ENCODE measurements at regions of chr4 and their contacts with region 1.

Region 1: DNA sequence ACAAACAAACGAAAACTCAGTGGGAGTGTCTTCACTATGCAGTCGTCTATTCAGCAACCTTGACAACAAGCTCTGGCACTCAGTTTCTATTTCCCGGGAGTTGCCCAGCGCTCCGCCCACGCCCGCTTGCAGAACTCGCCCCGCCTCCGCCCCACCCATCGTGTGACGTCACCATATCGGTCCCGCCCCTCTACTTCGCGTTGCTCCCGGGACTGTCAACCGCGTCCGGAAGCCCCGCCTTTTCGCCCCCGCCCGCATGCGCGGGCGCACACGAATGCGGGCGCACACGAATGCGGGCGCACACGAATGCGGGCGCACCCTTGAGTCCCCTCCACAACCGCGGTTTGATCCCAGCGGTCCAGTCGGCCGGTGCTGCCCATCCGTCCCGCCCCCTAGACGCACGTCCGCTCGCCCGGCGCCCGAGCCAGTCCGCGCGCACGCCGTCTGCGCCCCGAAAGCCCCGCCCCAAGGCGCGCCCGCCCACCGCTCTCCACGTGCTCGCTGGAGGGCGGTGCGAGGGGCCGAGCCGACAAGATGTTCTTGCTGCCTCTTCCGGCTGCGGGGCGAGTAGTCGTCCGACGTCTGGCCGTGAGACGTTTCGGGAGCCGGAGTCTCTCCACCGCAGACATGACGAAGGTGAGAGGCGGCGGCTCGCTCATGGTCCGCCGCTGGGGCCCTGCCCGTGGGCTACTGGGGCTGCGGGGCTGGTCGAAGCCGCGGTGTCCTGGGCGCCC is at the start of gene LAP3:
- DNase-seq: peak; percentile 90
- ATAC-seq: peak; percentile 92
- H3K4me3 ChIP-seq: peak within 1 kb of the TSS; percentile 91
- H3K27ac ChIP-seq: peak within 1 kb of the TSS; percentile 44
- H3K4me1 ChIP-seq: peaks cover 10% of the 10 kb centered on the region
- H3K27me3 ChIP-seq: no peaks in the 10 kb centered on the region
- CTCF ChIP-seq: no peak
- total RNA-seq, gene LAP3: 63.8 and 65.1 TPM in 2 replicates

Region 2: DNA sequence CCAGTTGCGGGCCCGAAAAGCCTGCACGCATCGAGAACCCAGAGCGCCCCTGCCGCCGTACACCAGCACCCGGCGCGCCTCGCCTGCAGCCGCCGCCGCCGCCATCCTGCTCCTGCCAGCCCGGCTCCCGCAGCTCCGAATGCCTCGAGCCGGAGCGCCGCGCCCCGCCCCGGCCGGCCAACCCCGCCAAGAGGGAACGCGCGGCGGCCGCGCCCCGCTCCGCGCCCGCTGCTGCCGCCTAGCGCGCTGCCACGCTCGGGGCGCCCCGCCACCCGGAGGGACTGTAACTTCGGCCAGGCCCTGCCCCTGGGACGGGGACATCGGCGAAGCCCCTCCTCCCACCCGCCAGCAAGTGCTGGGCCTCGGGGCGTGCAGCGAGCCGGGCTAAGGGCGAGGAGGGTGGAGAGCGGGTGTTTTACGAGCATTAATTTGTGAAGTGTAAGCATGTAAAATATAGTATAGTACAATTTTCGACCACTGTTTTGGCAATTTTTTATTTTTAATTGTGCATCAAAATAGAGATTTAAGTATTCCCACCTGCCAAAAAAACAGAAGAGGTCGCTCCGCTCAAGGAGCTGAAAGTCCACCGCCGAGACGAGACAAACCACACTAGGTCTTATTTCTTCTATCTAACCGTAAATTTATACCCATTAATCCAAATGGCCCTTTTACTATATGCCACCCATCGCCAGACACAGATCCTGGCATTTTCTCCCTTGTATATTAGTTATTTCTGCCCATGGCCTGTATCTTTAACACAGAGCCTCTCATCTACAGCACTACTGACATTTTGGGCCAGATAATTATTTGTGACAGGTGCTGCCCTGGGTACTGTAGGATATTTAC is 64.9 kb before region 1 on chr4 and contains the start of gene QDPR:
- CTCF ChIA-PET with region 1: no interaction called
- POLR2A ChIA-PET with region 1: no interaction called
- intact Hi-C with region 1: loop called (anchors 1 kb)
- DNase-seq: peak; percentile 80
- ATAC-seq: peak; percentile 95
- H3K4me3 ChIP-seq: peak within 1 kb of the TSS; percentile 89
- H3K27ac ChIP-seq: 0 out of 2 replicates have a peak within 1 kb of the TSS, but pooled peaks have one; percentile 8
- H3K4me1 ChIP-seq: peaks cover 10% of the 10 kb centered on the region
- H3K27me3 ChIP-seq: peaks cover 16% of the 10 kb centered on the region
- CTCF ChIP-seq: no peak; the same call in 1 of the 2 replicates
- total RNA-seq, gene QDPR: 10.0 and 13.4 TPM in 2 replicates

Region 3: DNA sequence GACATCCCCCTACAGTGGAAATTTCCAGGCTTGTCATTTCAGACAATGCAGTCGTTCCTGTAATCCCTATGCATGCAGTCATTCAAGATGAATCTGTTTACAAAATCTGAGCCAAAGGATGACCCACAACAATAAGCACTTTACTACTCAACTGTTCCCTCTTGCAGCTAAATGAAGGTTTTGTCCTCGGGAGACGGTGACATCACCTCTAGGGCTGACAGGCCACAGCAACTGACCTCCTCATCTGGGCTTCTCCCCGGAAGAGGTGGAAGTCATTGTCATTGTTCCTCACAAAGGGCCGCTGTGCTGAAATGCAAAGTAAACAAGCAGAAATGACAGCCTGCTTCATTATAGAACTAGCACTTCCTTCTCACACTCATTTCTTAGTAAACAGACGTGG is 32.9 kb before region 1 on chr4:
- CTCF ChIA-PET with region 1: no interaction called
- POLR2A ChIA-PET with region 1: no interaction called
- intact Hi-C with region 1: loop called (anchors 1 kb)
- DNase-seq: peak; percentile 42
- ATAC-seq: peak; percentile 76
- H3K4me3 ChIP-seq: no peak overlapping the region
- H3K27ac ChIP-seq: no peak overlapping the region
- H3K4me1 ChIP-seq: peaks cover 2% of the 10 kb centered on the region; the same call in 1 of the 2 replicates
- H3K27me3 ChIP-seq: no peaks in the 10 kb centered on the region
- CTCF ChIP-seq: no peak

Region 4: DNA sequence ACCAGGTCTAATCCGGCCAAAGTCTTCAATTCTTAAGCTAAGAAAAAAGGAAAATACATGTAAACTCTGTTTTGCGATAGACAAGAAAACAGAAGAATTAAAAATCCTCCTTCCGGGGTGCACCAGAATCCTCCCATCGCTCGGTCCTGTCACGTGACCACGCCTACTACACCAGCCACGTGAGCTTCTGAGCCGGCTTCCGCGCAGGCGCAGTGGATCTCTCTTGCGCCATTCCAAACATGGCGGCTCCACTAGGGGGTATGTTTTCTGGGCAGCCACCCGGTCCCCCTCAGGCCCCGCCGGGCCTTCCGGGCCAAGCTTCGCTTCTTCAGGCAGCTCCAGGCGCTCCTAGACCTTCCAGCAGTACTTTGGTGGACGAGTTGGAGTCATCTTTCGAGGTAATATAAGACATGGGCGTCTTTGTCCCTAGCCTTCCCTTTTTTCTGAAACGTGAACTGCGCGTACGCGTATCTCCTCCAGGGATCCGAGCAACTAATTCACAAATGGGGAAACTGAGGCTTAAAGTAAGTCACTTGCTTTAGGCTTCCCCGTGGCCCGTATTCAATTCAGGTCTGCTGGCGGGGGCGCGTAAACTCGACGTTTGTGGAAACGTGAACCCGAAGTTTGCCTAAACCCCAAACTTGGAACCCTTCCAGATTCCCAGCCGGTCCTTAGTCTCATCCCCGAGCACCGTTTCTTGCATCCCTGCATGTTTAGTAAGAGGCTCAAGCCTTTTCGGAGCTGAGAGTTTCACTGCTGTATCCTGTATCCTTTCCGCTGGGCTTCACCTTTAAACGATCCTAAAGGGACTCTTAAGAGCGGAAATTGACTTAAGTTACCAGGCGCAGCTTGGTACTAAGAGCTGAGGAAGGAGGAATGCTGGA is 37.6 kb after region 1 on chr4 and contains the start of gene MED28:
- CTCF ChIA-PET with region 1: no interaction called
- POLR2A ChIA-PET with region 1: no interaction called
- intact Hi-C with region 1: loop called (anchors 2 kb)
- DNase-seq: peak; percentile 90
- ATAC-seq: peak; percentile 80
- H3K4me3 ChIP-seq: peak within 1 kb of the TSS; percentile 98
- H3K27ac ChIP-seq: peak within 1 kb of the TSS; percentile 85
- H3K4me1 ChIP-seq: peaks cover 12% of the 10 kb centered on the region
- H3K27me3 ChIP-seq: no peaks in the 10 kb centered on the region
- CTCF ChIP-seq: no peak
- total RNA-seq, gene MED28: 4.4 and 11.6 TPM in 2 replicates